A673 (cell line): ENCODE measurements at regions of chr3 and their contacts with region 1.

Region 1: DNA sequence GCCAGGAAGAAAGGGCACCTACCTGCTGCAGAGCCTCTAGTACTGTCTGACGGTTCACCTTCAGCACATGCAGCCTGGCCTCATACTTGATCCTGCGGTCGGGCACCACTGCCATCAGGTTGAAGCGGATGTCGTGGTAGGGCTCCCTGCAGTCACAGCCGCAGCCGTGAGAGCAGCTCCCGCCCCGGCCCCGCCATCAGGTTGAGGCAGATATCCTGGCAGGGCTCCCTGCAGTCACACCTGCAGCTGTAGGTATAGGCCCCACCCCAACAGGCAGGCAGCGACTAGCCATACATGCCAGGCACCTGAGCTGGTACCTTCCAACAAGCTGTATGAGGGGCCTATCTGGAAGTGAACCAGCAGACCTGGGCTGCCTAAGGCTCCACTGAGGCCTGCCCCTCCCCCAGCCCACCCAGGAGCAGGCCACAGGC is 38.7 kb downstream of the SEMA3G start:
- DNase-seq: no peak
- H3K4me3 ChIP-seq: no peak overlapping the region
- H3K27ac ChIP-seq: no peak overlapping the region
- H3K4me1 ChIP-seq: peaks cover 4% of the 10 kb centered on the region
- H3K27me3 ChIP-seq: no peaks in the 10 kb centered on the region
- CTCF ChIP-seq: no peak

Region 2: GRCh38 chr3:51887620-51888019 is 518.6 kb before region 1 on chr3:
- CTCF ChIA-PET with region 1: no interaction called
- POLR2A ChIA-PET with region 1: no interaction called
- intact Hi-C with region 1: no loop called
- DNase-seq: no peak
- H3K4me3 ChIP-seq: no peak overlapping the region
- H3K27ac ChIP-seq: no peak overlapping the region
- H3K4me1 ChIP-seq: no peaks in the 10 kb centered on the region
- H3K27me3 ChIP-seq: no peaks in the 10 kb centered on the region
- CTCF ChIP-seq: no peak

Region 3: DNA sequence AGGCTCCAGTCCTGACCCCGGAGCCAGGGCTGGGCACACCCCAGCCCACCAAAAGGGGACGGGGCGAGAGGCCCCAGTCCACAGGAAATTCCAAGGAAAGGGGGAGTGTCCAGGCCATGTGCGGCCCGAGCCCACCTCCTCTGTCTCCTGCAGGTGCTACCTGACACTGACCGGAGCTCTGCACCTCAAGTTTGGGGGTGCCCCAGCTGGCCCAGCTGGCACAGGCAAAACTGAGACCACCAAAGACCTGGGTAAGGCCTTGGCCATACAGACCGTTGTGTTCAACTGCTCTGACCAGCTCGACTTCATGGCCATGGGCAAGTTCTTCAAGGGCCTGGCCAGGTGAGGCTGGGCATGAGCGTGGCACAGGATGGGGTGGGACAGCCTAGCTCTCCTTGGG is 45.2 kb before region 1 on chr3:
- CTCF ChIA-PET with region 1: no interaction called
- POLR2A ChIA-PET with region 1: interaction called, 11 read pairs
- intact Hi-C with region 1: no loop called
- DNase-seq: no peak
- H3K4me3 ChIP-seq: no peak overlapping the region
- H3K27ac ChIP-seq: no peak overlapping the region
- H3K4me1 ChIP-seq: no peaks in the 10 kb centered on the region
- H3K27me3 ChIP-seq: no peaks in the 10 kb centered on the region
- CTCF ChIP-seq: no peak

Region 4: GRCh38 chr3:53597136-53597915 is 1191.1 kb after region 1 on chr3:
- CTCF ChIA-PET with region 1: no interaction called
- POLR2A ChIA-PET with region 1: interaction called, 17 read pairs
- intact Hi-C with region 1: no loop called
- DNase-seq: no peak
- H3K4me3 ChIP-seq: no peak overlapping the region
- H3K27ac ChIP-seq: no peak overlapping the region
- H3K4me1 ChIP-seq: no peaks in the 10 kb centered on the region
- H3K27me3 ChIP-seq: no peaks in the 10 kb centered on the region
- CTCF ChIP-seq: no peak